Right ventricle myocardium superior (tissue), 1 donor: ENCODE measurements at regions of chr4 and their contacts with region 1.

Region 1: GRCh38 chr4:147863111-147863747 is 131.3 kb downstream of the ARHGAP10 start:
- DNase-seq: no peak
- ATAC-seq: no peak

Region 2: GRCh38 chr4:147707865-147708672 is 155.2 kb before region 1 on chr4:
- intact Hi-C with region 1: loop called (anchors 2 kb)
- DNase-seq: no peak
- ATAC-seq: peak; percentile 90

Region 3: DNA sequence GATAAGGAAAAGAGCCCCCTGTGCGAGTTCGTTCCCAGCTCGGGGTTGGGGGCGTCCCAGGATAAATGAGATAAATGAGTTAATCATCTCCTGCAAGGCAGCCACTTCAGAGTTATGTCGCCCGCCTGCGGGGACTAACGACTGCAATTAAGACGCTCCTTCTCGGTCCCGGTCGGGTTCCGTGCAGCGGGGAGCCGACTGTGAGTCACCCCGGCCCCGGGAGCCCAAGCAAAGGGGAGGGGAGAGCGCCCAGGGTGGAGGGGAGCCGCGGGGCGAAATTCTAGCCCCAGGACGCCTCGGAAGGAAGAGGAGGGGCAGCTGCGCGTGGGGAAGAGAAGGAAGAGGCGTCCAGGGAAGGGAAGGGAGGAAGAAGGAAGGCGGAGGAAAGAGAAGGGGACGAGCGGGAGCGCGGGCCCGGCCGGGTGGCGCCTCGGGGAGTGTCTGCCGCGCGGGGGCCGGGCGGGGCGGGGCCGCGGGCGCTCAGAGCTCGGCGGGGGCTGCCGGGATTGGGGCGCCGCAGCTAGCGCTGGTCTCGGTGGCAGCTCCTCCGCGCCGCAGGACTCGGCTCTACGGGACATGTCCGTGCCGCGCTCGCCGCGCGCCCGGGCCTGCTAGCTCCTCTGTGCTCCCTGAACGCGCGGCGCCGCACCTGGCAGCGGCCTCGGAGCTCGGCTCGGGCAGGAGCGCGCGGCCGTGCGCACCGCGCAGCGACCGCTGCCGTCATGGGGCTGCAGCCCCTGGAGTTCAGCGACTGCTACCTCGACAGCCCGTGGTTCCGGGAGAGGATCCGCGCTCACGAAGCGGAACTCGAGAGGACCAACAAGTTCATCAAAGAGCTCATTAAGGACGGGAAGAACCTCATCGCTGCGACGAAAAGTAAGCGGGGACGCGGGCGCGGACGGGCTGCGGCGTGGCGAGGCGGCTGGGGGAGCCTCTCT is 131.4 kb before region 1 on chr4 and contains the start of gene ARHGAP10:
- intact Hi-C with region 1: loop called (anchors 5 kb)
- DNase-seq: peak; percentile 88
- ATAC-seq: peak; percentile 84
- total RNA-seq, gene ARHGAP10: 64.0 TPM

Region 4: GRCh38 chr4:148344352-148344751 is 481.1 kb after region 1 on chr4:
- intact Hi-C with region 1: no loop called
- DNase-seq: peak; percentile 42
- ATAC-seq: peak; percentile 63

Region 5: GRCh38 chr4:148434075-148434773 is 571.0 kb after region 1 on chr4:
- intact Hi-C with region 1: no loop called
- DNase-seq: no peak
- ATAC-seq: no peak